Aorta (tissue), 5 donors: ENCODE measurements at regions of chr12 and their contacts with region 1.

Region 1: GRCh38 chr12:85448548-85449139 is 168.6 kb downstream of the ALX1 start:
- DNase-seq: no peak
- ATAC-seq: no peak
- H3K4me3 ChIP-seq: no peak overlapping the region
- H3K27ac ChIP-seq: no peak overlapping the region
- H3K4me1 ChIP-seq: no peaks in the 10 kb centered on the region
- H3K27me3 ChIP-seq: no peaks in the 10 kb centered on the region

Region 2: DNA sequence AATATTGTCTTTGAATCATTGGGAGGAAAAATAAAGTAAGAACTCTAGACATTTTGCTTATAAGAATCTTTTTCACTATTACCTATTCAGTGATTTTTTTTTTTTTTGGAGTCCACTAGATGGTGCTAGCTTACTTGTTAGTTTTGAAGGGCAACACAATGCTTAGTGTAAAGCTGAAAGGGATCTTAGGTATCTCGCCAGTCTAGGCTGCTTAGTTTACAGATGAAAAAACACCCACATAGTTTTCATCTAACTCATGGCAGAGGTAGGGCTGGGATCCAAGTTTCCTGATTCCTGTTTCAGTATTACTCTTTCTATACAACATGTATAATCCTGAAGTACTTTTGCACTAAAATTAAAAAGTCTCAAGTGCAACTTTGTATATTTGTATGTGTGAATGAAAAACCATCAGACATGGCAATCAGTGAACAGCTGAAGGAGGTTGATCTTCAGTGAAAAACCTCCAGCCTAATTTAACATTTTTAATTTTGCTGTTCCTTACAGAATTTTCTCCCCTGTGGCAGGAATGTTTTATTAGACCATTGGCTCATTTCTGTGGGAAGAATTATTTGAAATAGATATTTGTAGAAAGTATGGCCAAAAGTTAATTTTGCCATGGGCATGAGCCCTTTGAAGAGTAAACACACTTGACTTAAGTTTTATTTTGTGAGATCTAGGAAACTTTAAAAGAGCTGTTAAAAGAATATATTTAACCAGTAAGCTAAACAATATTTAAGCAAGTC is 371.8 kb before region 1 on chr12:
- intact Hi-C with region 1: loop called in 1 of 2 experiments (anchors 5 kb)
- DNase-seq: no peak
- ATAC-seq: peak; percentile 66
- H3K4me3 ChIP-seq: no peak overlapping the region
- H3K27ac ChIP-seq: no peak overlapping the region
- H3K4me1 ChIP-seq: no peaks in the 10 kb centered on the region
- H3K27me3 ChIP-seq: no peaks in the 10 kb centered on the region

Region 3: DNA sequence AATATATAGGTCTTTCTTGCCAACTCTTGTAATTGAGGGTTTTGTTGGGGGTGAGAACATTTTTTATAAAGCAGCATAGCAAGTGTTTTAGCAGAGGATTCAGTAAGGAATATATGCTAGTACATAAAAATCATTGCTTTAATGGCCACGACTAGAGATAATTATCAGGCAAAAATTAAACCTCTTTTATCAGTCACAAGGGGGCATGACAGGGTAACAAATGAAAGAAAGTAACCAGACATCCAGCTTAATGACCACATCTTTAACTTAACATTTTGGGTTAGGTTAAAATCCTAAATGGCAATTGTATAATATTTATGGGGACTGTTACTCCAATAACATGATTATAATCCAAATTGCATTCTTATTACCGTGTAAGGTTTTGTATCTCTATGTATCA is 292.9 kb before region 1 on chr12:
- intact Hi-C with region 1: loop called in 1 of 2 experiments (anchors 5 kb)
- DNase-seq: no peak
- ATAC-seq: no peak
- H3K4me3 ChIP-seq: no peak overlapping the region
- H3K27ac ChIP-seq: no peak overlapping the region
- H3K4me1 ChIP-seq: no peaks in the 10 kb centered on the region
- H3K27me3 ChIP-seq: no peaks in the 10 kb centered on the region

Region 4: GRCh38 chr12:85266356-85266755 is 182.3 kb before region 1 on chr12:
- intact Hi-C with region 1: no loop called
- DNase-seq: no peak
- ATAC-seq: no peak
- H3K4me3 ChIP-seq: no peak overlapping the region
- H3K27ac ChIP-seq: no peak overlapping the region
- H3K4me1 ChIP-seq: no peaks in the 10 kb centered on the region
- H3K27me3 ChIP-seq: peaks cover 0 to 3% of the 10 kb centered on the region in 2 donors